Calu3 (cell line): ENCODE measurements at regions of chr7 and their contacts with region 1.

Region 1: DNA sequence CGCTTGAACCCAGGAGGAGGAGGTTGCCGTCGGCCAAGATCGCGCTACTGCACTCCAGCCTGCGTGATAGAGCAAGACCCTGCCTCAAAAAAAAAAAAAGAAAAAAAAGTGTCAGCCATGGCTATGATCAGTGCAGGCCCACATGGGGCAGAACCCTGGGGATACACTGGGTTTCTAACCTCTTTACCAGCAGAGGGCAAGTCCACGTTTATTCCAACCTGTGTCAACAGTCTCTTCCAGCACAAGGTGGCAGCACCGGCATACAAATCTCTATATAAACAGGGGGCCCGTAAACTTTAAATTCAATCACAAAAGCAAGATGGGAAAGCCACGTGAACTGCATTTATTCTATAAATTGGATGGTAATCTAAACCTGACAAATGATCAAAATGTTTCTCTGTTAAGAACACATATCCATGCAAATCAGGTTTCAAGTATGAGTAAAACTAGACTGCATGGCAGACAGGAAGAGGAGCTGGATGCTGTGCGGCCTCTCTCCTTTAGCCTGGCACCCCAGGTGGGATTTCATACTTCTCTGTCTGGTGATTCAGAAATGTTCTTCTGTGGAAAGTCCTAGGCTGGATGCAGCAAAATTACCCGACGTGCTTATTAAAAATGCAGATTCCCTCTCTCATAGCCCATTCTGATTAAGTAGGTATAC is 60.0 kb upstream of the STEAP1B start:
- DNase-seq: peak; percentile 87
- H3K4me3 Mint-ChIP-seq: no peak overlapping the region
- H3K27ac Mint-ChIP-seq: peak overlapping the region; percentile 29
- H3K4me1 Mint-ChIP-seq: peaks cover 31% of the 10 kb centered on the region
- H3K27me3 Mint-ChIP-seq: peaks cover 18% of the 10 kb centered on the region
- CTCF ChIP-seq: peak; percentile 99

Region 2: DNA sequence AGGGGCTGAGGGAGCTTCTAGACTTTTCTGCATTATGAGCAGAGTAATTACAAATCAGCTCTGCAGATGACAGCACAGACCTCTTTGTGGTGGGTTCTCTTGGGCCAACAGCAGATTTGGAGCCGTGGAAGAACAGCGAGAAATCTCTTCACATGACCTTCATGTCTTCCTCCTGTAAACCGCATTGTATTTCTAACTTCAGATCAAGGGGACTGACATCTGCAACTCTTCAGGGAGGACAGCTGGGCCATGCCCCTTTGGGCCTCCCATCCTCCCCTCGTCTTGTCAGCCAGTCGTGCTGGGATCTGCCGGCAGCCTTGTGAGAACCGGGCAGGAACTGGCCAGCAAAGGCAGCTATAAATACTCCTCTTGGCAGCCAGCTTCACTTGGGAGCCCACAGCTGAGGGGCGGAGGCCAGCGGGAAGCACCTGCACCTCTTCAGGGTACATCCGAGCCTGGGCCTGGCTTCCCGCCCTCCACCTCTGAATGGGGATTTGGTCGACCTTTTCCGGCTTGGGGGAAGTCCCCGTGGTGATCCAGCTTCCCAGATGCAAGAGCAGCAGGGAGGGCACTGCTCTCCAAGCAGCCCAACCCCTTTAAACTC is 114.7 kb before region 1 on chr7:
- CTCF ChIA-PET with region 1: no interaction called
- intact Hi-C with region 1: no loop called
- DNase-seq: peak; percentile 88
- H3K4me3 Mint-ChIP-seq: peak overlapping the region; percentile 63
- H3K27ac Mint-ChIP-seq: peak overlapping the region; percentile 88
- H3K4me1 Mint-ChIP-seq: peaks cover 65% of the 10 kb centered on the region
- H3K27me3 Mint-ChIP-seq: no peaks in the 10 kb centered on the region
- CTCF ChIP-seq: no peak

Region 3: GRCh38 chr7:22586786-22587140 is 26.8 kb after region 1 on chr7:
- CTCF ChIA-PET with region 1: interaction called, 17 read pairs
- intact Hi-C with region 1: loop called (anchors 1 kb)
- DNase-seq: peak; percentile 75
- H3K4me3 Mint-ChIP-seq: peak overlapping the region; percentile 44
- H3K27ac Mint-ChIP-seq: peak overlapping the region; percentile 93
- H3K4me1 Mint-ChIP-seq: peaks cover 78% of the 10 kb centered on the region
- H3K27me3 Mint-ChIP-seq: no peaks in the 10 kb centered on the region
- CTCF ChIP-seq: peak; percentile 31

Region 4: GRCh38 chr7:22667562-22668239 is 107.7 kb after region 1 on chr7:
- CTCF ChIA-PET with region 1: interaction called, 6 read pairs
- intact Hi-C with region 1: loop called (anchors 2 kb)
- DNase-seq: peak; percentile 74
- H3K4me3 Mint-ChIP-seq: peak overlapping the region; percentile 1
- H3K27ac Mint-ChIP-seq: peak overlapping the region; percentile 83
- H3K4me1 Mint-ChIP-seq: peaks cover 69% of the 10 kb centered on the region
- H3K27me3 Mint-ChIP-seq: no peaks in the 10 kb centered on the region
- CTCF ChIP-seq: no peak

Region 5: DNA sequence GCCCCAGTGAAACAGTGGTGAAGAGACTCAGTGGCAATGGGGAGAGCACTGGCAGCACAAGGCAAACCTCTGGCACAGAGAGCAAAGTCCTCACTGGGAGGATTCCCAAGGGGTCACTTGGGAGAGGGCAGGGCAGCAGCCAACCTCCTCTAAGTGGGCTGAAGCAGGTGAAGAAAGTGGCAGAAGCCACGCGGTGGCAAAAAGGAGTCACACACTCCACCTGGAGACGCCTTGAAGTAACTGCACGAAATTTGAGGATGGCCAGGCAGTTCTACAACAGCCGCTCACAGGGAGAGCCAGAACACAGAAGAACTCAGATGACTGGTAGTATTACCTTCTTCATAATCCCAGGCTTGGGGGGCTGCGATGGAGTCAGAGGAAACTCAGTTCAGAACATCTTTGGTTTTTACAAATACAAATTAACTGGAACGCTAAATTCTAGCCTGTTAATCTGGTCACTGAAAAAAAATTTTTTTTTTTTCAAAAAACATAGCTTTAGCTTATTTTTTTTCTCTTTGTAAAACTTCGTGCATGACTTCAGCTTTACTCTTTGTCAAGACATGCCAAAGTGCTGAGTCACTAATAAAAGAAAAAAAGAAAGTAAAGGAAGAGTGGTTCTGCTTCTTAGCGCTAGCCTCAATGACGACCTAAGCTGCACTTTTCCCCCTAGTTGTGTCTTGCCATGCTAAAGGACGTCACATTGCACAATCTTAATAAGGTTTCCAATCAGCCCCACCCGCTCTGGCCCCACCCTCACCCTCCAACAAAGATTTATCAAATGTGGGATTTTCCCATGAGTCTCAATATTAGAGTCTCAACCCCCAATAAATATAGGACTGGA is 166.6 kb after region 1 on chr7:
- CTCF ChIA-PET with region 1: interaction called, 327 read pairs
- intact Hi-C with region 1: loop called (anchors 1 kb)
- DNase-seq: peak; percentile 81
- H3K4me3 Mint-ChIP-seq: peak overlapping the region; percentile 73
- H3K27ac Mint-ChIP-seq: peak overlapping the region; percentile 86
- H3K4me1 Mint-ChIP-seq: peaks cover 63% of the 10 kb centered on the region
- H3K27me3 Mint-ChIP-seq: no peaks in the 10 kb centered on the region
- CTCF ChIP-seq: peak; percentile 80

Region 6: GRCh38 chr7:22782616-22783232 is 222.8 kb after region 1 on chr7:
- CTCF ChIA-PET with region 1: interaction called, 25 read pairs
- intact Hi-C with region 1: loop called (anchors 1 kb)
- DNase-seq: peak; percentile 86
- H3K4me3 Mint-ChIP-seq: no peak overlapping the region
- H3K27ac Mint-ChIP-seq: no peak overlapping the region
- H3K4me1 Mint-ChIP-seq: peaks cover 20% of the 10 kb centered on the region
- H3K27me3 Mint-ChIP-seq: no peaks in the 10 kb centered on the region
- CTCF ChIP-seq: peak; percentile 89

Region 7: GRCh38 chr7:23055582-23056178 is 495.7 kb after region 1 on chr7:
- CTCF ChIA-PET with region 1: interaction called, 5 read pairs
- intact Hi-C with region 1: loop called (anchors 1 kb)
- DNase-seq: peak; percentile 73
- H3K4me3 Mint-ChIP-seq: no peak overlapping the region
- H3K27ac Mint-ChIP-seq: no peak overlapping the region
- H3K4me1 Mint-ChIP-seq: no peaks in the 10 kb centered on the region
- H3K27me3 Mint-ChIP-seq: peaks cover 20% of the 10 kb centered on the region
- CTCF ChIP-seq: peak; percentile 88